Activated CD4-positive, alpha-beta memory T cell treated with anti-CD3 and anti-CD28 coated beads, Interleukin-2, amount 10 ng/mL, durations not matched to agents 7 days and 5 days (primary cell): ENCODE measurements at regions of chr15 and their contacts with region 1.

Region 1: GRCh38 chr15:90818251-90819210 is 49.9 kb upstream of the FURIN start:
- DNase-seq: peak; percentile 62
- H3K4me3 Mint-ChIP-seq: peak overlapping the region; percentile 18
- H3K27ac Mint-ChIP-seq: peak overlapping the region; percentile 93
- H3K4me1 Mint-ChIP-seq: peaks cover 80% of the 10 kb centered on the region
- H3K27me3 Mint-ChIP-seq: no peaks in the 10 kb centered on the region

Region 2: GRCh38 chr15:90497912-90498311 is 320.6 kb before region 1 on chr15:
- CTCF ChIA-PET with region 1: no interaction called
- POLR2A ChIA-PET with region 1: no interaction called
- DNase-seq: no peak
- H3K4me3 Mint-ChIP-seq: no peak overlapping the region
- H3K27ac Mint-ChIP-seq: peak overlapping the region; percentile 50
- H3K4me1 Mint-ChIP-seq: peaks cover 3% of the 10 kb centered on the region
- H3K27me3 Mint-ChIP-seq: no peaks in the 10 kb centered on the region

Region 3: DNA sequence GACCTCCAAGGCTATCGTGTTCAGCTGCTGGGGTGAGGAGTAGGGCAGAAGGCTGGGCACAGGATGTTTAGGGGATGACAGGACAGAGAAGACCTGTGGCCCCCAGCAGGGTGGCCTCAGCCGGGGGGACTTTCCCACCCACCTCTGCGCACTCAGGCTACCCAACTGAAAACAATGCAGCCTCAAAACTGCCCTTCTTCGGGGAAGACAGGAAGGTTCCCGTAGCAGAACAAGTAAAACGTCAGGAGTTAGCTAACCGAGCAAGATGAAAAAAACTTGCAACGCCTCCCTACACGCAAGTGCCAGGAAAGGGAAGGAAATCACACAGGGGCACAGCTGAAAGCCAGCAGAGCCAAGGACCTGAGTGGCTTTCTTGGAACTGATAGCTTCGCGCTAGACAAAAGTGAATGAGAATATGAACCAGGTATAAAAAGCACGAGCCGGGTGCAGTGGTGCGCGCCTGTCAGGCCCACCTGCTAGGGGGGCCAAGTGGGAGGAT is 11.5 kb after region 1 on chr15:
- CTCF ChIA-PET with region 1: interaction called, 9 read pairs
- POLR2A ChIA-PET with region 1: interaction called, 143 read pairs
- DNase-seq: peak; percentile 81
- H3K4me3 Mint-ChIP-seq: peak overlapping the region; percentile 58
- H3K27ac Mint-ChIP-seq: peak overlapping the region; percentile 99
- H3K4me1 Mint-ChIP-seq: peaks cover 78% of the 10 kb centered on the region
- H3K27me3 Mint-ChIP-seq: no peaks in the 10 kb centered on the region

Region 4: GRCh38 chr15:90839187-90840071 is 20.9 kb after region 1 on chr15:
- CTCF ChIA-PET with region 1: interaction called, 16 read pairs
- POLR2A ChIA-PET with region 1: interaction called, 120 read pairs
- DNase-seq: no peak
- H3K4me3 Mint-ChIP-seq: peak overlapping the region; percentile 79
- H3K27ac Mint-ChIP-seq: peak overlapping the region; percentile 90
- H3K4me1 Mint-ChIP-seq: peaks cover 83% of the 10 kb centered on the region
- H3K27me3 Mint-ChIP-seq: no peaks in the 10 kb centered on the region

Region 5: GRCh38 chr15:90851114-90851513 is 32.6 kb after region 1 on chr15:
- CTCF ChIA-PET with region 1: interaction called, 14 read pairs
- POLR2A ChIA-PET with region 1: interaction called, 157 read pairs
- DNase-seq: peak; percentile 80
- H3K4me3 Mint-ChIP-seq: peak overlapping the region; percentile 63
- H3K27ac Mint-ChIP-seq: peak overlapping the region; percentile 91
- H3K4me1 Mint-ChIP-seq: peaks cover 77% of the 10 kb centered on the region
- H3K27me3 Mint-ChIP-seq: no peaks in the 10 kb centered on the region

Region 6: DNA sequence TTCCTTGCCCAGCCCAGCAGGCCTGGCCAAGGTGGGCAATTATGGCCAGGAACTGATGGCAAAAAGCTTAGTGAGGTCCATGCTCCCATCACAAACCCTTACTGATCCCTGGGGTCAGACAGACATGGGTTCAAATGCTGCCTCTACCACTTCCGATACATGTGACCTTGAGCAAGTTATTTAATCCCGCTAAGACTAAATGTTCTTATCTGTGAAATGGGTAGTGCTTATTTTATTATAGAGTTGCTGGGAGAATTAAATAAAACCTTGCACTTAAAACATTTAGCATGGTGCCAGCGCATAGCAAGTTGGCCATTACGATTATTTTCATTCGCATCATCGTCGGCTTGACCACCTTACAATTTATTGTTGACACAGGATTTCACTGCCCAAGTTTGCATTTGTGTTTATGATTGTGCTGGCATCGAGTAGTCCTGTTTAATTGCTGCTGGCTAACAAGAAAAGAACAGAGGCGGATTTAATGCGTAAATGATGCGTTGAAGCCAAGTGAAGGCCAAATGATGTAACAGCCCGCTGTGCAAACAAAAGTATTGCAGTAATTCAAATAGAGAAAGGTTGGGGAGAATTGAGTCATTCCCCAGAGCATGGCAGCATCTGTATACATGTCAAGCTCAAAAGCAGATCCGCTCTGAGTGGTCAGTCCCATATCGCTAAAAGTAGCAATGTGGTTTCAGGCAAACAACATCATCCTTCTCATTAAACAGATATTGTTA is 42.6 kb after region 1 on chr15:
- CTCF ChIA-PET with region 1: interaction called, 4 read pairs
- POLR2A ChIA-PET with region 1: interaction called, 157 read pairs
- DNase-seq: no peak
- H3K4me3 Mint-ChIP-seq: no peak overlapping the region
- H3K27ac Mint-ChIP-seq: no peak overlapping the region
- H3K4me1 Mint-ChIP-seq: peaks cover 65% of the 10 kb centered on the region
- H3K27me3 Mint-ChIP-seq: no peaks in the 10 kb centered on the region

Region 7: GRCh38 chr15:90869601-90870353 is 51.2 kb after region 1 on chr15:
- CTCF ChIA-PET with region 1: interaction called, 6 read pairs
- POLR2A ChIA-PET with region 1: interaction called, 64 read pairs
- DNase-seq: peak; percentile 63
- H3K4me3 Mint-ChIP-seq: peak overlapping the region; percentile 85
- H3K27ac Mint-ChIP-seq: peak overlapping the region; percentile 91
- H3K4me1 Mint-ChIP-seq: peaks cover 59% of the 10 kb centered on the region
- H3K27me3 Mint-ChIP-seq: no peaks in the 10 kb centered on the region

Region 8: DNA sequence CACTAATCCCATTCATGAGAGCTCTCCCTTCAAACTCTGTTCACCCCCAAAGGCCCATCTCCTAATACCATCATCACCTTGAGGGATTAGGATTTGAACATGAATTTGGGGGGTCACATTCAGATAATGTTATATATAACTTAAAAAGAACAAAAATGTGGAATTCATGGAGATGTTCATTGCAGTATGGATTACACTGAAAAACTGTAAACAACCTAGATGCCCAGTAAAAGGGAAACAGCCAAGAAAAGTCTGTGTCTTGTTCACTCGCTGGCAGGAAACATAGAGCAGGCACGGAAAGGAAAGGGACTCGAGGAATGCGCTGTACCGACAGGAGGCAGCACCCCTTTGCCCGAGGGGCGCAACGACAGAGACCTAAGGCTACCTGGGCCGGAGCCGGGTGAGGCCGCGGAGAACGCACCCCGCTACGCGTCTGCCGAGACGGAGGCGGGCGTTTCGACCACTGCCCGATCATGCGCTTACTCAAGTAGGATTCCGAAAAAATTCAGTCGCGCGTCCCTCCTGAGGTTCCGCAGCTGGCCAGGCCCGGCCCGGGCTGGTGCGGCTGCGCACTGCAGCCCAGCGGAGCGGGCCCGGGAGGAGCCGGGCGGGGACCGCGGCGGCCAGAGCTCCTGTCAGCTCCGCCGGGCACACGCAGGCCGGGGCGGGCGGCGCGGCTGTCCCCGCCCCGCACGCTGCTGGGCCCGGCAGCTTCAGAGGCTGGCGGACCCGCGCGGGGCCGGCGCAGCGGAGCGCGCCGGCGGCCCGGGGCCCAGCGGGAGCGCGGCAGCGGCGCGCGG is 83.7 kb after region 1 on chr15:
- CTCF ChIA-PET with region 1: interaction called, 3 read pairs
- POLR2A ChIA-PET with region 1: interaction called, 11 read pairs
- DNase-seq: peak; percentile 77
- H3K4me3 Mint-ChIP-seq: peak overlapping the region; percentile 80
- H3K27ac Mint-ChIP-seq: peak overlapping the region; percentile 81
- H3K4me1 Mint-ChIP-seq: peaks cover 40% of the 10 kb centered on the region
- H3K27me3 Mint-ChIP-seq: no peaks in the 10 kb centered on the region